ENCODE measurements at regions of chr3 and their contacts with region 1.

Region 1: DNA sequence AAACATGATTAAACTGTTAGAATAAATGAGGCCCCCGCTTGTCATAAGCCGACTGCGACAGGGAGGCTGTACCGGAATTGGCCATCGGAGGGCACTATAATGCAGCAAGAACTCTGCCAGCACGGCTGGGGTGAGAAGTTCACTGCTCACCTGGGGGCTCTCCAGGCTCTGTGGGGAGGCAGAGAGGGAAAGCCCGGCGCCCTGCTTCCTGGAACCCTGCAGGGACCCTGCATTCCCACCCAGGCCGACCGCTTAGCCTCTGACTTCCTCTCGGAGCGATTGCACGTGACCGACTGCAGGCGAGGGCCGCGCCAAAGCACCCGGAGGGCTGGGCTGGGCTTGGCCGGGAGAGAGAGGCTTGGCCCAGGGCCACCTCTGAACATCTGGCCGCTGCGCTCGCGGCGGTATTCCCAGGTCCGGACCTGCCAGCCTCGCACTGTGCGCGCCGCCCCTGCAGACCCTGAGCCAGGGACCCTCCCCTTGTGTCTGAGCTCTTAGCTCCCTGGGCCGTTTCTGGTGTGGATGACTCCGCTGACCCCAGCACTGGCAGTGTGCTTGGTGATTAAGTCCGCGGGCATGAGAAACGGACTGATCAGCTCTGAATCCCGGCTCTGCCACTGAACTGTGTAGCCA is 26.2 kb downstream of the DRD3 start:
- DNase-seq: peak; percentile 90
- H3K4me3 ChIP-seq: peak overlapping the region; percentile 31
- H3K27ac ChIP-seq: no peak overlapping the region
- H3K4me1 ChIP-seq: peaks cover 4% of the 10 kb centered on the region
- H3K27me3 ChIP-seq: peaks cover 4% of the 10 kb centered on the region
- CTCF ChIP-seq: peak; percentile 94

Region 2: DNA sequence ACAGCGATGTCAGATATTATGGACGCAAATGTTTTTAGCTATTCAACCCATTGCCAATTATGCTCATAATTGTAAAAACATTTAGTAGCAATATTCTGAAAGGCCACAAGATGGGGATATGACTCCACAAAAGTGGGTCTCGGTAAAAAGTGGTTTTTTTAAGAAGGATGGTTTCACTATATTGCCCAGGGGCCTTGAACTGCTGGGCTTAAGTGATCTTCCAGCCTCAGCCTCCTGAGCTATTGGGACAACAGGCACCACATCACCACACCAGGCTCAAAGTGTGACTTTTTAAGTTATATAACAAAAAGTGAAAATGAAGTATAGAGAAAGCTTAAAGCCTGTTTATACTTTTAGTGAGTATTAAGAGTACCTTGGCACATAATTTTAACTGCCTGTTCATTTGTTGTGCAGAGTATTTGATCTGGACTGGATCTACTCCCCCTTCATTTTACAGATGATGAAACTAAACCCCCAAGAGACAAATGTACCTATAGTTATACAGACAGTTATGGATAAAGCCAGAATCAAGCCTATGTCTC is 416.0 kb before region 1 on chr3:
- CTCF ChIA-PET with region 1: interaction called, 3 read pairs
- POLR2A ChIA-PET with region 1: no interaction called
- intact Hi-C with region 1: loop called (anchors 5 kb)
- DNase-seq: peak; percentile 79
- H3K4me3 ChIP-seq: no peak overlapping the region
- H3K27ac ChIP-seq: peak overlapping the region; percentile 22
- H3K4me1 ChIP-seq: peaks cover 33% of the 10 kb centered on the region
- H3K27me3 ChIP-seq: no peaks in the 10 kb centered on the region
- CTCF ChIP-seq: peak; percentile 70

Region 3: GRCh38 chr3:113844622-113845222 is 307.9 kb before region 1 on chr3:
- CTCF ChIA-PET with region 1: no interaction called
- POLR2A ChIA-PET with region 1: no interaction called
- intact Hi-C with region 1: loop called (anchors 10 kb)
- DNase-seq: peak; percentile 65
- H3K4me3 ChIP-seq: no peak overlapping the region
- H3K27ac ChIP-seq: no peak overlapping the region
- H3K4me1 ChIP-seq: no peaks in the 10 kb centered on the region
- H3K27me3 ChIP-seq: no peaks in the 10 kb centered on the region
- CTCF ChIP-seq: peak; percentile 73

Region 4: GRCh38 chr3:114194750-114195149 is 42.1 kb after region 1 on chr3:
- CTCF ChIA-PET with region 1: no interaction called
- POLR2A ChIA-PET with region 1: no interaction called
- intact Hi-C with region 1: no loop called
- DNase-seq: no peak
- H3K4me3 ChIP-seq: no peak overlapping the region
- H3K27ac ChIP-seq: no peak overlapping the region
- H3K4me1 ChIP-seq: no peaks in the 10 kb centered on the region
- H3K27me3 ChIP-seq: peaks cover 5% of the 10 kb centered on the region
- CTCF ChIP-seq: no peak

Region 5: DNA sequence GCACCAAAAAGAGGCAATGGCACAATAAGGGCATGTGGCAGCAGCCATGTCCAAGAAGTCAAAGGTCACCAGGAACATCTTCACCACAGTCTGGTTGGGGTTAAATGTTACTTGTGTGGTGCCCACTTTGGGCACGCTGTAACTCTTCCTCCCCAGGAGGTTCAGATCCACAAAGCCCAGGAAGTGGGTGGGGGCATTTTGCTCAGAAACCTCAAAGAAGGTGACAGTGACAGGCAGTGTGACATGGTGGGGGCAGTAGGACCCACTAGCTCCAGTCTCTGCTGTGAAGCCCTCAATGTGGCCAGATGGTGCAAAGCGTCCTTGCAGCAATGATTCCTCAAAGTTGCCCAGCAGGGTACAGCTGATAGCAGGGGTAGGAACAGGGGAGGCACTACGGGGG is 79.0 kb after region 1 on chr3:
- CTCF ChIA-PET with region 1: no interaction called
- POLR2A ChIA-PET with region 1: no interaction called
- intact Hi-C with region 1: no loop called
- DNase-seq: no peak
- H3K4me3 ChIP-seq: no peak overlapping the region
- H3K27ac ChIP-seq: no peak overlapping the region
- H3K4me1 ChIP-seq: no peaks in the 10 kb centered on the region
- H3K27me3 ChIP-seq: no peaks in the 10 kb centered on the region
- CTCF ChIP-seq: no peak

Region 6: DNA sequence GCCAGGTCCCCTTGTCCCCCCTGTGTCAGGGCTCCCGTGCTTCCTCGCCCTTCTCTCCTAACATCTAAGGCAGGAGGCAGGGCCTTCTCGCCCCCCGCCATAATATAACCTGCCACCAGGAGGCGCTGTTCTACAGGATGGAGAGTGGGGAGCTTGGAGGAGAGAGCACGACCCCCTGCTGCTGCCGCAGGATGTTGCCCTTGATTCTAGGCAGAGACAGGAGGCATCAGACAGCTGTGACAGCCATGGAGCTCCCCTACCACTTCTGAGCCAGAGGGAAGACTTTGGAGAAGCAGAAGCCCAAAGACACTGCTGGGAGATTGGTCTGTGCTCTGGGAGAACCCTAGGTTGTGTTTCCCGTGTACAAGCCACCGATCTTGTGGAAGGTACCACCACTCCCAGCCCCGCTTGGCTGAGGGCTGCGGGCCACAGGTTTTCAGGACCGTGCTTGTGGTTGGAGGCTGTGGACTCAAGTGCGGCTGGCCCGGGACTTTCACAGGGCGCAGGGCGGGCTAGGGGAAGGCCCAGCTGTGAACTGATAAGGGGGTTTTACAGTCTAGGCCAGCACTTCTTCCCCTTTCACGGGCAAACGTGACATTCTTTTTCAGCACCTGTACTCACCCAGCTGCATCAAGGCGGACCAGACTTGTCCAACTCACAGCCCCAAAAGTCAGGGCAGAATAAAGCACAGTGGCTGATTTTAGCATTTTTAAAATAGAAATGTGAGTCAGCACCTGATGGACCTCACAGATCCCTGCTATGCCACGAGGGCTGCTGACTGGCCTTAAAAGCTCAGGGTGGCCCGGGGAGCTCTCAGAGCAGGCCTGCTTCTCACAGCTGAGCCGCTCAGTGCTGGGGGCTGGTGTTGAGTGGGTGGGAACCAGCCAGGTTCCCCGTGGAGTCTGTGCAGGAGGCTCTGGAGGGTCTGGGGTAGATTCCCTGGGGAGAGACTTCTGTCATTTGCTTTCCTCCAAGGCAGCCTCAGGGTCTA is 138.6 kb after region 1 on chr3:
- CTCF ChIA-PET with region 1: no interaction called
- POLR2A ChIA-PET with region 1: no interaction called
- intact Hi-C with region 1: loop called (anchors 5 kb)
- DNase-seq: peak; percentile 94
- H3K4me3 ChIP-seq: no peak overlapping the region
- H3K27ac ChIP-seq: no peak overlapping the region
- H3K4me1 ChIP-seq: no peaks in the 10 kb centered on the region
- H3K27me3 ChIP-seq: no peaks in the 10 kb centered on the region
- CTCF ChIP-seq: peak; percentile 95

Region 7: GRCh38 chr3:114451561-114452018 is 299.0 kb after region 1 on chr3:
- CTCF ChIA-PET with region 1: no interaction called
- POLR2A ChIA-PET with region 1: no interaction called
- intact Hi-C with region 1: loop called (anchors 10 kb)
- DNase-seq: no peak
- H3K4me3 ChIP-seq: peak overlapping the region; percentile 58
- H3K27ac ChIP-seq: peak overlapping the region; percentile 83
- H3K4me1 ChIP-seq: peaks cover 67% of the 10 kb centered on the region
- H3K27me3 ChIP-seq: no peaks in the 10 kb centered on the region
- CTCF ChIP-seq: no peak